Activated CD4-positive, alpha-beta T cell treated with anti-CD3 and anti-CD28 coated beads for 36 hours (primary cell): ENCODE measurements at regions of chr10 and their contacts with region 1.

Region 1: GRCh38 chr10:72426986-72427385 is 72.3 kb upstream of the DNAJB12 start:
- DNase-seq: no peak
- ATAC-seq: no peak
- H3K4me3 Mint-ChIP-seq: no peak overlapping the region
- H3K27ac Mint-ChIP-seq: no peak overlapping the region
- H3K4me1 Mint-ChIP-seq: no peaks in the 10 kb centered on the region
- H3K27me3 Mint-ChIP-seq: no peaks in the 10 kb centered on the region

Region 2: GRCh38 chr10:72276421-72277339 is 150.3 kb before region 1 on chr10:
- CTCF ChIA-PET with region 1: no interaction called
- POLR2A ChIA-PET with region 1: no interaction called
- intact Hi-C with region 1: no loop called
- DNase-seq: peak; percentile 62
- ATAC-seq: peak; percentile 2
- H3K4me3 Mint-ChIP-seq: peak overlapping the region; percentile 95
- H3K27ac Mint-ChIP-seq: peak overlapping the region; percentile 99
- H3K4me1 Mint-ChIP-seq: peaks cover 33% of the 10 kb centered on the region
- H3K27me3 Mint-ChIP-seq: no peaks in the 10 kb centered on the region

Region 3: DNA sequence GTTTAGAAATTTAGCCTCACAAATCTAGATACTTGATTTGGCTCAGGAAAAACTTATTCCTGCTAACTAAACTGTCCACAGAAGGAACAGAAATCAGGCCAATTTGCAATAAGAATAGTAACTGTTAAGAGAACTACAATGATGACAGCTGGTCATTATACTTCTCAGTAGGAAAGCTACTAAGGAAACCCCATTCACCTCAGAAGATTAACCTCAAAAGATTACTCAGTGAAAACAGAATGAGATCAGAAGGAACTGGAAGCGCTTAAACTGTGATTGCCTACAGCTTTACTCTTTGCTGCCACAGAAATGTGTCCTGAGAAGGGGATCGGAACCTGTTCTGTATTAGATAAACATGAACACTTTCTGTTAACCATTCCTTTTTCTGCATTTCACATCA is 47.9 kb before region 1 on chr10:
- CTCF ChIA-PET with region 1: no interaction called
- POLR2A ChIA-PET with region 1: no interaction called
- intact Hi-C with region 1: loop called in 1 of 2 experiments (anchors 1 kb)
- DNase-seq: no peak
- ATAC-seq: no peak
- H3K4me3 Mint-ChIP-seq: no peak overlapping the region
- H3K27ac Mint-ChIP-seq: no peak overlapping the region
- H3K4me1 Mint-ChIP-seq: peaks cover 5% of the 10 kb centered on the region
- H3K27me3 Mint-ChIP-seq: no peaks in the 10 kb centered on the region

Region 4: DNA sequence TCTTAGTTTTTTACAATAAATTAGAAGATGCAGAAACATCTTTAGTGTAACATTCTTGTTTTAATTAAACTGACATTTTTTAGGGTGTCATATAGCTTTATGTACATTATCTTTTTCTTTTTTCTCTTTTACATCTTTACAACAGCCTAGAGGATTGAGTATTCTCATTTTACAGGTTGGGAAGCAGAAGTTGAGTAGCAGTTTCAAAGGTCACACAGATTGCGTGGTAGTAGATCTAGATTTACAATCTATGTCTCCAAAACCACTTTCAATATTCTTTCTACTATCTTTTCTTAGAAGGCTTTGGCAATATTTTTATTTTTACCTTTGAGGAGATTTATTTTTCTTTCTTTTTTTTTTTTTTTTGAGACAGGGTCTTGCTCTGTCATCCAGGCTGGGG is 246.3 kb after region 1 on chr10:
- CTCF ChIA-PET with region 1: no interaction called
- POLR2A ChIA-PET with region 1: no interaction called
- intact Hi-C with region 1: no loop called
- DNase-seq: no peak
- ATAC-seq: no peak
- H3K4me3 Mint-ChIP-seq: no peak overlapping the region
- H3K27ac Mint-ChIP-seq: no peak overlapping the region
- H3K4me1 Mint-ChIP-seq: peaks cover 12% of the 10 kb centered on the region
- H3K27me3 Mint-ChIP-seq: peaks cover 4% of the 10 kb centered on the region